GM18951 (cell line): ENCODE measurements at regions of chr15 and their contacts with region 1.

Region 1: DNA sequence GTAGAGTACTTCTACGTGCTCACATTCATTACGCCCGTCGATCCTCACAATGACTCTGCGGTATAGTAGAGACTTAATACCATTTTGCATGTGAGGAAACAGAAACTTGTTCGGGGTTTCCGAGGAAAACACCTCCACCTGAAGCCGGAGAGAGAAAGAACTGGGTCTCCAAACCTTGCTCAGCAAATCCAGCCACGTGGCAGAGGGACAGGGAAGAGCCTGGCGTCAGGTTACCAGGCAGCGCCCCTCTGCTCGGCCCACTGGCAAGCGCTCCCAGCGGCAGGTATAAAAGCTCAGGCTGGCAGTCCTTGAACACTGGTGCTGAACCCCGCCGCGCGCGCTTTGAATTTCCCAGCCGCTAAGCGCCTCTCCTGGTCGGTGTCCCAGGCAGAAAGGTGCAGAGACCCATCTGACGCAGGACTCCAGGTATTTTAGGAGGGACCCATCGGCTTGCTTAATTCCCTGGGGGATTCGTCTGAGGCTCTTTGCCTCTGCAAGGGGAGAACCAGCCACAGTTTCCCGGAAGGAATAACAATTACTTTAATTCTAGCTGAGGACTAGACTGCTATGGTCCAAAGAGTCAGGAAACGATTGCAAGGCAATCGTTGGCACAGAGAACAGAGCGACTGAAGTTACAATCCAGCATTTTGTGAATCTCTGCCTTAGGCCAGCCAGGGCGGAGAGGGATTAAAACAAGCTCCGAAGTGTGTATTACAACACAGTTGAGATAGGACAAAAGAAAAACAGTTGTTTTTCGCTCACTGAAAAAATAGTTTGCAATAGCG is at the start of gene C2CD4A:
- POLR2A ChIP-seq: no peak

Region 2: DNA sequence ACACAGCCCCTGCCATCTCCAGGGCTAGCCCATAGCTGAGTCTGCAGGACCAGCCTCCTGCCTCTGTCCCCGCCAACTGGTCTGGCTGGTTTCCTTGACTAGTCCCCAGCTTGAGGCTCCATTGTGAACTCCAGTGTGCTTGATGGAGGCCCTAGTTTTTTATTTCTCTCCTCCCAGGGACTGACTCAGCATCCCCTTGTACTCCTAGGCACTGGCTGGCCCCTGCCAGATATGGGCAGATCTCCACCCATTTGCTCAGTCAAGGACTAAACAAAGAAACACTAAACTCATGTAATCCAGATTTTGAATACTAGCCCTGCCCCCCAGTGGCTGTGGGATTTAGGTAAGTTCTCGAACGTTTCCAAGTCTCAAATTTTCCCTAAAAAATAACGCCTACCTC is 422.3 kb before region 1 on chr15:
- in situ Hi-C with region 1: no loop called
- POLR2A ChIP-seq: no peak

Region 3: GRCh38 chr15:61869656-61870055 is 197.2 kb before region 1 on chr15:
- in situ Hi-C with region 1: loop called (anchors 5 kb)
- POLR2A ChIP-seq: no peak

Region 4: DNA sequence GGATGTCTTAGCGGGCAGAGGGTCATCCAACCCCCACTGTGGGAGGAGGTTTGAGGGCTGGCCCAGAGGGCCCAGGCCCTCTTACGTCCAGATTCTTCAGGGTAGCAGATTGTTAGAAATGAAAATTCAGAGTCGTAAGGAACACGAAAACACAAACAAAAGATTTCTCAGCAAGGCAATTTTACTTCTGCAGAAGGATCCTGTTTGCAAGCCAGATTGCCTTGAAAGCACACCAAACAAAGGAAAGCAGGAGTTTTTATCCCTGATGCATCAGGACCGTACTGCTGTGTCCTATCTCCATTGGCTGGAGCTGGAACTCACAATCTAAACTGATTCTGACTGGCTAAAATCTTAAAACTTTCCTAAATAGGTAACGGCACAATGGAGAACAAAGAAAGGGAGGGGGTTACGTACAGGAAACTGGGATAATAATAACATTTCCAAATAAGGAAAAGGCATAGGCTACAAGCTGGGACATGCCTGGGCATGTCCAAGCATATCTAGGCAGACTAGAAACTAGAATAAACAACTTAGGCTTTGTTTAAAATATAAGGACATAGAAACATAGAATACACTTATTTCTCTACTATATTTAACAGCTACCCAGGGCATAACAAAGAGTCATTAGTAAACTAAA is 195.6 kb after region 1 on chr15:
- in situ Hi-C with region 1: no loop called
- POLR2A ChIP-seq: no peak

Region 5: DNA sequence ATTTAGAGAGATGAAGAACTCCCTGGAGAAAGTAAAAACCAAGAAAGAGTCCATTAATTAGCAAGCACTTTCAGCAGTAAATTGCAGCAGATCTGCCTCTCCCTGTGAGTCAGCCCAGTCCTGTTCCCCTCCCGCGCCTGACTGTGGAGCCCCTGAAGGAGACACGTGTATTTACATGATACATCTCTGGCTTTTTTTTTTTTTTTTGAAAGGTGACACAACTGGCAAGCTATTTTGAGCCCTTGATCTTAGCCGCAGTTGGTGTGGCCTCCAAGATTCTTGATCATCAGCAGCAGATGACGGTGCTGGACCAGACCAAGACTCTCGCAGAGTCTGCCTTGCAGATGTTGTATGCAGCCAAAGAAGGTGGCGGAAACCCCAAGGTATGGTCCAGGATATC is 703.9 kb after region 1 on chr15:
- in situ Hi-C with region 1: no loop called
- POLR2A ChIP-seq: no peak